Heart left ventricle (tissue), 16 donors: ENCODE measurements at regions of chr17 and their contacts with region 1.

Region 1: DNA sequence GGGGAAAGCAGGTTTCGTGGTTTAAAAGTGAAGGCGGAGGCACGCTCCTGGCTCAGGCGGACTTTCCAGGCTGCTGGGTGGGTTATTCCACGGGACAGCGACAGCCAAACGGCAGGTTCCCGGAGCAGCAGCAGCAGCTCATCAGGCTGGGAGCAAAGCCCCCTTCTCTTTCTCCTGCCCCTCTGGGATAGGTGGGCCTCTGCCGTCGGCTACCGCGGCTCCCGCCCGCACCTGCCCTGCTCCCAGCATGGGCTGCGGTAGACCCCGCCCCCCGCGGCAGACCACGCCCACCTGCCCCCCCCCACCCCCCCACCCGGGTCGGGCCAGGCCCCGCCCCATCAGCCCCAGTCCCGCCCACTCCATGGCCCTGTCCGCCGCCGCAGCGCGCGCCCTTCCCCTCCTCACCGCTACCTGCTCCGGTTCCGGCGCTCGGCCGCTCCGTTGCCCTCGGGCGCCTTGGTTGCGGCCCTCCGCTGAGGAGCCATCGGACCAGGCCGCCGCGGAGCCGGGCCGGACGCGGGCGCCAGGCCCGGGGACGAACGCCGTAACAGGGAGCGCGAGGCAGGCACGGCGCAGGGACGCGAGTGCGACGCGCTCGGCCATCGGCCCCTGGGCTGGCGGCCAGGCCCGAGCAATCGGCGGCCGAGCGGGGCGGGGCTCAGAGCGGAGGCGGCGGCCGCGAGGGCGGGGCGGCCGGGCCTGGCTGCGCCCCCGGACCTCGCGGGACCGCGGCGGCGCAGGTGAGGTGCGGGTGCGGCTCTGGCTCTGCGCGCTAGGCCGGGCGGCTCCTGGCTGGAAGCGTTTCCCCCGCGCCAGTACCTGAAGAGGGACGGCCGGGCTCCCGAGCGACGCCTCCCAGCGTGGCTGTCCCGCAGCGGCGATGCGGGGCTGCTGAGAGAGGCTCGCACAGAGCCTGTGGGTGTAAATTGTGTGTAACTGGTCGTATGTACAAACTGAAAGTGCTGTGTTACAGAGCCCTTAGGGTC is at the starts of genes HEXD and OGFOD3:
- DNase-seq: peak; percentile 80 to 91 (median 88)
- ATAC-seq: peak; percentile 69 to 97 (median 90)
- H3K4me3 ChIP-seq: peak within 1 kb of the TSS; percentile 65 to 98 (median 82)
- H3K27ac ChIP-seq: peak within 1 kb of the TSS; percentile 82 to 96 (median 92)
- H3K4me1 ChIP-seq: peaks cover 3 to 28% (median 19%) of the 10 kb centered on the region in 12 donors
- H3K27me3 ChIP-seq: no peaks in the 10 kb centered on the region
- CTCF ChIP-seq: peak in 1 of 12 donors; percentile 7
- POLR2A ChIP-seq: peak in 1 of 2 donors; percentile 66
- total RNA-seq, gene HEXD: 9.9 to 20.2 (median 15.1) TPM
- total RNA-seq, gene OGFOD3: 23.3 to 38.5 (median 31.4) TPM

Region 2: GRCh38 chr17:82212331-82213250 is 205.7 kb before region 1 on chr17 and contains the start of gene CCDC57:
- intact Hi-C with region 1: loop called in 2 of 10 experiments (anchors 5 to 10 kb)
- DNase-seq: peak; percentile 83 to 92 (median 86)
- ATAC-seq: peak; percentile 39 to 86 (median 70)
- H3K4me3 ChIP-seq: peak within 1 kb of the TSS; percentile 84 to 99 (median 92)
- H3K27ac ChIP-seq: peak within 1 kb of the TSS; percentile 51 to 90 (median 84)
- H3K4me1 ChIP-seq: peaks cover 0 to 46% (median 27%) of the 10 kb centered on the region in 12 donors
- H3K27me3 ChIP-seq: no peaks in the 10 kb centered on the region
- CTCF ChIP-seq: peak in 3 of 12 donors; percentile 3 to 8 (median 5)
- POLR2A ChIP-seq: peak in 1 of 2 donors; percentile 66
- total RNA-seq, gene CCDC57: 4.3 to 17.6 (median 10.7) TPM

Region 3: GRCh38 chr17:82351716-82352488 is 66.4 kb before region 1 on chr17:
- intact Hi-C with region 1: loop called (anchors 1 to 5 kb)
- DNase-seq: peak; percentile 79 to 88 (median 85)
- ATAC-seq: peak; percentile 49 to 91 (median 87)
- H3K4me3 ChIP-seq: no peak overlapping the region
- H3K27ac ChIP-seq: no peak overlapping the region
- H3K4me1 ChIP-seq: peaks cover 0 to 14% (median 3%) of the 10 kb centered on the region in 12 donors
- H3K27me3 ChIP-seq: peaks cover 0 to 11% (median 0%) of the 10 kb centered on the region in 9 donors
- CTCF ChIP-seq: peak; percentile 92 to 99 (median 97)
- POLR2A ChIP-seq: no peak

Region 4: DNA sequence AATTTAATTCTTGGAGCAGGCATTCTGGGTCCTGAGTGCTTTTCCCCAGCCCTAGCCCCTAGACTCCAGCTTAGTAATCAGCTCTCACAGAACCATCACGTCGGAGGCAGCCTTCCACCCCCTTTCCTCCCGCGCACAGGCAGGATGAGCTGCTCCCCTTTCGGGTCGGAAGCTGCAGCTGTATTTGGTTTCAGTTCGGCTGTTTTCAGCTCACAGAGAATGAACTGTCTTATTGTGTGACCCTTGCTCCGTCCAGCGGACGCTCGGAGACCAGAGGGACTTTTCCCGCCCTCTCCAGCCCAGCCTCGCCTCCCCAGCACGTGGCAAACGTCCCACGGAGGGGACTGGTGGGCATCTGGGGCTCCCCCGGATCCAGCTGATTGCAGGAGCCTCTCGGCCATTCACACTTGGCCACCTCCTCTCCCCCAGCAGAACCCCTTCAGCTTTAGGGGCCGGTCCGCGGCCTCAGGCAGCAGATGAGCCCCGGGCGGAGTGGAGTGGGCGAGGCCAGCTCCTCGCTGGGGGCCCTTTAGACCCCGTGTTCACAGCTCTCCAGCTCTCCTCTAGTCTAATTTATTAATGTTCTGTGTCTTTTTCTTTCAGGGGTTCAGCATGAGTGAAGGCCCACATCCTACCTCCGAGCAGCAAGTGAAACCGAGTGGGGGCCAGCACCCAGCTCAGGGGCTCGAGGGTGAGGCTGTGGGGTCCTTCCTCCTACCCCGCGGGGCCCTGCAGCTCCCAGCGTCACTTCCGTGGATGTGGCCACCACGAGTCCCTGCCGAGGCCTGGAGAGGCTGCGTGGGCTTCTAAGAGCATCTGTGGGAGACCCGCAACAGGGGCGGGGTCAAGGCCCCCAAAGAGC is 47.6 kb before region 1 on chr17:
- intact Hi-C with region 1: loop called in 1 of 10 experiments (anchors 5 kb)
- DNase-seq: no peak
- ATAC-seq: peak in 2 of 4 donors; percentile 8 to 27
- H3K4me3 ChIP-seq: peak overlapping the region in 9 of 12 donors; percentile 12 to 51 (median 41)
- H3K27ac ChIP-seq: no peak overlapping the region
- H3K4me1 ChIP-seq: peaks cover 0 to 29% (median 19%) of the 10 kb centered on the region in 12 donors
- H3K27me3 ChIP-seq: peaks cover 24 to 81% (median 42%) of the 10 kb centered on the region in 9 donors
- CTCF ChIP-seq: no peak
- POLR2A ChIP-seq: no peak

Region 5: GRCh38 chr17:82450170-82451106 is 32.1 kb after region 1 on chr17 and contains the start of gene CYBC1:
- intact Hi-C with region 1: loop called in 3 of 10 experiments (anchors 2 to 5 kb)
- DNase-seq: peak; percentile 93 to 97 (median 94)
- ATAC-seq: peak; percentile 90 to 97 (median 96)
- H3K4me3 ChIP-seq: peak within 1 kb of the TSS; percentile 60 to 100 (median 95)
- H3K27ac ChIP-seq: peak within 1 kb of the TSS; percentile 63 to 97 (median 94)
- H3K4me1 ChIP-seq: peaks cover 0 to 43% (median 23%) of the 10 kb centered on the region in 12 donors
- H3K27me3 ChIP-seq: no peaks in the 10 kb centered on the region
- CTCF ChIP-seq: no peak
- POLR2A ChIP-seq: peak in 1 of 2 donors; percentile 86
- total RNA-seq, gene CYBC1: 20.1 to 82.1 (median 25.4) TPM

Region 6: DNA sequence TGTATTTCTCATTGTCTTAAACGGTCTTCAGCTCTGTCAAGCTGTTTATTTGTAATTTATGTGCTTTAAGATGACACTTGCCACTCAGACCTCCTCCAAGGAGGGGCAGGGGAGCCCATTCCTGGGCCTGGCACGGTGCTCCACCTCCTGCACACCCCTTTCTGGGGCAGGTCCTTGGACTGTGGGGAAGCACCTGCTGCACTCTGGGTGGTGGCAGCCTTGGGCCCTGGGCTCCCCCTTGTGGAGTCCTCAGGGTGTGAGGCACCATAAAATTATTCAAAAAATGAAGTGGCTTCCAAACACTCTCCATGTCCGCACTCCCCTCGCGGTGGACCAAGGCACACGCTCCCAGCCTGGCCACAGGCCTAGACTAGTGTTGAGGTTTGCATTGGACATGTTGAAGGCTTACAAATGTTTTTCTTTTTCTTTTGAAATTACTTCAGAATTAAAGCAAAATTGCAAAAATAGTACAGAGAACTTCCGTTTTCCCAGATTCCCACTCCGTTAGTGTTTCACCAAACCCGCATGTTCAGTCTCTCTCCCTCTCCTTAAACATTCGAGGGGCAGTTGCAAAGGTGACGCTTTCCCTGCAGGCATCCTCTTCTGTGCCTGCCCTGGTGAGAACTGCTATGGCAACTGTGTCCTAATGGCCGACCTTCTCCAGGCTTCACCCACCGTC is 133.6 kb after region 1 on chr17:
- intact Hi-C with region 1: loop called in 2 of 10 experiments (anchors 5 kb)
- DNase-seq: peak; percentile 67 to 85 (median 76)
- ATAC-seq: peak; percentile 62 to 82 (median 75)
- H3K4me3 ChIP-seq: no peak overlapping the region
- H3K27ac ChIP-seq: peak overlapping the region in 8 of 12 donors; percentile 6 to 85 (median 58)
- H3K4me1 ChIP-seq: peaks cover 13 to 62% (median 50%) of the 10 kb centered on the region in 12 donors
- H3K27me3 ChIP-seq: no peaks in the 10 kb centered on the region
- CTCF ChIP-seq: peak; percentile 57 to 84 (median 74)
- POLR2A ChIP-seq: no peak